Sigmoid colon (tissue), 7 donors: ENCODE measurements at regions of chr1 and their contacts with region 1.

Region 1: DNA sequence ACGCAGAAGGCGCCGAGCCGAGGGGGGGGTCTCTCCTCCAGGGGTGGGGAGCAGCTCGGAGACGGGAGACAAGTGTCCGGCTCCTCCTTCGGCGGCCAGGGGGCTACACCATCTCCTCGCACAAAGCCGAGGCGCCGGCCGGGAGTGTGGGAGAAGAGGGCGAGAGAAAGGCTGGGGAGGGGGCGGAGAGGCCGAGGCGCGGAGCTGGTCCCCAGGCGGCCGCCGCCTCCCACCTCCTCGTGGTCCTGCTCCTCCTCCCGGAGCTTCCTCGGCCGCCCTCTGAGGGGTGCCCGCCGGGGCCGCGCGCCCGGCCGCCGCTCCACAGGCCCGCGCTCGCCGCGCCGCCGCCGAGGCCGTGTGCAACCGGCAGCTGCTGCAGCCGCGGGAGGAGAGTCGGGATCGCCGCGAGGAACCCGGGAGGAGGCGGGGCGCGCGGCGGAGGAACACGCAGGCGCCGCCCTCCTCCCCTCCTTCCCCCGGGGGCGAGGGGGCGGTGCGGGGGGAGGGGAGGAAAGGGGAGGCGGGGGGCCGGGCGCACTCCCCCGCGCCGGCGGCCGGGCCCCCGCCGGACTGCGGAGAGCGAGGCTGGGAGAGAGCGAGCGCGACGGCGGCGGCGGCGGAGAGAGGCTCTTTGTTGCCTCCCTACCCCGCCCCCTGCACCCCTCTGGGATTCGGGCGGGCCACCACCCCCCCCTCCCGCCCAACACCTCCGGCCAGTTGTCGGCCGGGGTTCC is at the start of gene ENAH:
- DNase-seq: peak; percentile 93
- H3K4me3 ChIP-seq: peak within 1 kb of the TSS; percentile 97 to 100 (median 98)
- H3K27ac ChIP-seq: peak within 1 kb of the TSS; percentile 97 to 100 (median 99)
- H3K4me1 ChIP-seq: peaks cover 0 to 53% (median 42%) of the 10 kb centered on the region in 4 donors
- H3K27me3 ChIP-seq: no peaks in the 10 kb centered on the region
- CTCF ChIP-seq: no peak
- EP300 ChIP-seq: no peak
- POLR2A ChIP-seq: no peak
- total RNA-seq, gene ENAH: 92.2 to 197 (median 116) TPM

Region 2: GRCh38 chr1:225508538-225509375 is 144.1 kb before region 1 on chr1:
- intact Hi-C with region 1: loop called (anchors 5 kb)
- DNase-seq: no peak
- H3K4me3 ChIP-seq: no peak overlapping the region
- H3K27ac ChIP-seq: peak overlapping the region; percentile 71 to 87 (median 83)
- H3K4me1 ChIP-seq: peaks cover 0 to 37% (median 24%) of the 10 kb centered on the region in 4 donors
- H3K27me3 ChIP-seq: no peaks in the 10 kb centered on the region
- CTCF ChIP-seq: no peak
- EP300 ChIP-seq: peak in 2 of 4 donors; percentile 53 to 57
- POLR2A ChIP-seq: no peak